IMR-90 (cell line): ENCODE measurements at regions of chr1 and their contacts with region 1.

Region 1: GRCh38 chr1:15662477-15662876 is 21.6 kb upstream of the PLEKHM2 start:
- DNase-seq: no peak
- ATAC-seq: no peak
- H3K4me3 ChIP-seq: no peak overlapping the region
- H3K27ac ChIP-seq: no peak overlapping the region
- H3K4me1 ChIP-seq: no peaks in the 10 kb centered on the region
- H3K27me3 ChIP-seq: no peaks in the 10 kb centered on the region
- CTCF ChIP-seq: no peak
- POLR2A ChIP-seq: no peak
- RAD21 ChIP-seq: no peak

Region 2: DNA sequence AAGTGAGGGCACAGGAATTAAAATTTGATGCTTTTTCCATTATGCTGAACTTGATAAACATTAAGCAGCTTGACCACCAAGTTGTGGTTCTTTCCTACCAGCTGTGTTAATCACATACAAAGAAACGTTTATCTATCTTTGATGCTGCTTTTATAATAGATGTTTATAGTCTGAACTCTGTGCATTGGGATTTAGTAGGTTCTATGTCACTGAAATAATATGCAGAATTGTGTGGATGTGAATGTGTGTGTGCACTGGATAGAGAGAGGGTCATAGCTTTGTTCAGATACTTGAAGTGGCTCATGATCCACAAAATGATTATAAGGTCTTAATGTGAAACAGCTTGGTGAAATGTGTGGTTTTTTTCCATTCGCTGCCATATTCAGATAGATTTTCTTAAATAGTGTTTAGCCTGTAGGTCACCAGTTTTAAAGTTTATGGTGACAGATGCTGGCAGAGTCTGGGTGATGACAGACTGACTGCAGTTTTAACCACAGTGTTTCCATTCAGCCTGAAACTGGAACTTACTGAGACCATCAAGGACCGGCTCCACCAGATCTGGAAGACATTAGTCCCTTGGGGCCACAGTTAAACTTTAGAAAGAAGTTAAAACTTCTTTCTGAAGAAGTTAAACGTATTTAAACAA is 35.0 kb before region 1 on chr1:
- CTCF ChIA-PET with region 1: no interaction called
- POLR2A ChIA-PET with region 1: no interaction called
- dilution Hi-C with region 1: no loop called
- in situ Hi-C with region 1: no loop called
- intact Hi-C with region 1: loop called (anchors 5 kb)
- DNase-seq: peak; percentile 26
- ATAC-seq: peak; percentile 72
- H3K4me3 ChIP-seq: no peak overlapping the region
- H3K27ac ChIP-seq: no peak overlapping the region
- H3K4me1 ChIP-seq: peaks cover 5% of the 10 kb centered on the region
- H3K27me3 ChIP-seq: no peaks in the 10 kb centered on the region
- CTCF ChIP-seq: no peak
- POLR2A ChIP-seq: no peak
- RAD21 ChIP-seq: no peak

Region 3: DNA sequence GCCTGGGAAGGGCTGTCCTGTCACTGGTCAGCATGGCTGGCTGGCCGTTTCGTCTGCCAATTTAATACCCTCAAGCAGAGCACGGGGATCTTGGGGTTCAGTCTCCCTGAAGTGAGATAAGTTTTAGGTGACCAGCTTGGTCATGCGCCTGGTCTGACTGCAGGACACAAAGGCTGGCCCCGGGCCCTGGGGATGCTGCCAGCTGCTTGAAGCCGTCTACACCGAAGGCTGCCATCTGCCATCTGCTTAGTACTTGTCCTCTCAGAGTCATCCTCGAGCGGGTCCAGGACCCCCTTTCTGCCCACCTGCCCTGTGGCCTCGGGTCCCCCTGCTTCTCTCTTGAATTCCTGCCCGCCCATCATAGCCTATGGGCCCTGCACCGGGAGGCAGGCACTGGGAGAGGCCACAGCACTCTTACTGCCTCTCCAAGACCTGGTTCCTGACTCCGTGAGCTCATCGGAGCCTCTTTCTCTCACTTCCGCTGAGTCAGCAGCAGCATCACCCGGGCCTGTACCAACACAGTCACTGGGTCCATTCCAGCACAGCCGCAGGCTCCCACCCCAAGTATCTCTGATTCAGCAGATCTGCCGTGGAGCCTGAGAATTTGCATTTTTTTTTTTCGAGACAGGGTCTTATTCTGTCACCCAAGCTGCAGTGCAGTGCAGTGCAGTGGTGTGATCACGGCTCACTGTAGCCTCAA is 103.2 kb after region 1 on chr1:
- CTCF ChIA-PET with region 1: no interaction called
- POLR2A ChIA-PET with region 1: no interaction called
- dilution Hi-C with region 1: no loop called
- in situ Hi-C with region 1: no loop called
- intact Hi-C with region 1: no loop called
- DNase-seq: peak; percentile 61
- ATAC-seq: no peak
- H3K4me3 ChIP-seq: no peak overlapping the region
- H3K27ac ChIP-seq: no peak overlapping the region
- H3K4me1 ChIP-seq: peaks cover 10% of the 10 kb centered on the region
- H3K27me3 ChIP-seq: no peaks in the 10 kb centered on the region
- CTCF ChIP-seq: no peak
- POLR2A ChIP-seq: no peak
- RAD21 ChIP-seq: no peak